ENCODE measurements at regions of chr17 and their contacts with region 1.

Region 1: GRCh38 chr17:794876-795275 is 12.7 kb downstream of the MRM3 start:
- DNase-seq: peak; percentile 77 to 98 (median 88)

Region 2: GRCh38 chr17:633641-634101 is 161.2 kb before region 1 on chr17:
- intact Hi-C with region 1: no loop called
- DNase-seq: no peak

Region 3: GRCh38 chr17:773467-774312 is 21.2 kb before region 1 on chr17:
- intact Hi-C with region 1: no loop called
- DNase-seq: peak in 1 of 10 donors; percentile 28

Region 4: GRCh38 chr17:944266-944826 is 149.5 kb after region 1 on chr17:
- intact Hi-C with region 1: no loop called
- DNase-seq: peak in 2 of 10 donors; percentile 32 to 43

Region 5: GRCh38 chr17:980406-981291 is 185.8 kb after region 1 on chr17:
- intact Hi-C with region 1: loop called (anchors 1 kb)
- DNase-seq: peak; percentile 57 to 95 (median 72)

Region 6: DNA sequence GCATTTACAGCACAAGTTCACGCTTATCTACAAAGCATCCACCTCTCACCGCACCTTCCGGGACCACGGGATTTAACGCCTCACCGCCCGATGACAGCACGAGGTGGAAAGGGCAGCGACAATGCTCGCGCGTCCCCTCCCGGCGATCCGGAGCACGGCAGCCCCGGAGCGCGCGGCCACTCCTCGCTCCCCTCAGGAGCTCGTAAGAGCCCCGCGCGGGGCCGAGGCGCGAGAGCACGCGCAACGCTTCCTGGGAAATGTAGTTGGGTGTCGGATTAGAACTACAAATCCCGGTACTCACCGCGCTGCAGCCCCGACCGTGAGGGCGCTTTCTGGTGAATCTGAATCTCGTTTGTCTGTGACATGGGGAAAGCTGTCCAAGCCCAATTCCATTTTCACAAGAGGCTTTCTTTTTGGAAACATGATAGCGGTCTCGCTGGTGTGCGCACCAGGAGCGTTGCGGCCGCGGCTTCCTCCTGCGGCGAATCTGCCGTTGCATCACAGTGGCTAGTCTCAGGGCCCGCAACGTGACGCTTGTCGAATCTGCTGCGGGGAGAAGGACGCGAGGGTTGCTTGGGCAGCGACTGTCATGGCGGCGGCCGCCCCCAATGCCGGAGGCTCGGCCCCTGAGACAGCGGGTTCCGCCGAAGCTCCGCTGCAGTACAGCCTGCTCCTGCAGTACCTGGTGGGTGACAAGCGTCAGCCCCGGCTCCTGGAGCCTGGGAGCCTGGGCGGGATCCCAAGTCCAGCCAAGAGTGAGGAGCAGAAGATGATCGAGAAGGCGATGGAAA is 201.9 kb after region 1 on chr17 and contains the start of gene TIMM22:
- intact Hi-C with region 1: loop called (anchors 5 kb)
- DNase-seq: peak; percentile 87 to 98 (median 91)

Region 7: DNA sequence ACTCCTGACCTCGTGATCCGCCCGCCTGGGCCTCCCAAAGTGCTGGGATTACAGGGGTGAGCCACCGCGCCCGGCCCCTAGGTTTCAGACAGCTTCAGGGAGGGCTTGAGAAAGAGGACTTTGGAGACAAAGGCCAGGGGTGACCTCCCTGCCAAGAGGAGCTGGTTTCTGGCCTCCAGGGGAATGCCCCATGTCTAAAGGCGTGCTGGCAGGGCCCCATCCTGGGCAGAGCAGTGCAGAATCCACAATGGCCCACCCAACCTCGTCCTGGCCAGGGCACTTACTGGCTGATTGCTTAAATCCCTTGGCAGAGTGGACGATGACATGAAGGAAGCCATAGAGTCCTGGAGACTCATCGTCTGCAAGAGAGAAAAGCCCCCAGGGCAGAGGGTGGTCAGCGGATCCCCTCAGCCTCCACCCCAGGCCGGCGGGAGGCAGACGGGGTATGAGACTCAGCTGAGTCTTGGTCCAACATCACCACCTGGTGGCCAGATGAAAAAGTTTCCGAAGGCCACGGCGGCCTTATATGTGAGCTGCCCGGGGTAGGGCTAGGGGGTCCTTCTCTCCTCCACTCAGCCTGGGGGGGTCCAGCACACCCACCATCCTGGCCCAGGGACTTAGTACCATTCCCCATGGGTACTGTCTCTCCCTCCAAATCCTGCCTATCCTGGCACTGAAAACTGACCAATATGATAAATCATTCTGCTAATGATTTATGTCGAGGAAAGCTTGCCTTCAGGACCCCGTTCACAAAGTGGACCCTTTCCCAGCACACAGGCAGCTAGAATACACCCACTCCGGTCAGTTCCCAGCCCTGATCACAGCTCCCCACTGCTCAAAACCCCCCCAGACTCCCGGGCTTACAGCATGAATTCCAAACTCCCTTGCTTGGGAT is 261.1 kb after region 1 on chr17:
- intact Hi-C with region 1: loop called (anchors 5 kb)
- DNase-seq: peak; percentile 43 to 95 (median 73)

Region 8: GRCh38 chr17:1474402-1475189 is 679.7 kb after region 1 on chr17:
- intact Hi-C with region 1: no loop called
- DNase-seq: peak in 1 of 10 donors; percentile 85

Measured in posterior cingulate gyrus (tissue), 11 donors.